ENCODE measurements at regions of chr5 and their contacts with region 1.

Region 1: DNA sequence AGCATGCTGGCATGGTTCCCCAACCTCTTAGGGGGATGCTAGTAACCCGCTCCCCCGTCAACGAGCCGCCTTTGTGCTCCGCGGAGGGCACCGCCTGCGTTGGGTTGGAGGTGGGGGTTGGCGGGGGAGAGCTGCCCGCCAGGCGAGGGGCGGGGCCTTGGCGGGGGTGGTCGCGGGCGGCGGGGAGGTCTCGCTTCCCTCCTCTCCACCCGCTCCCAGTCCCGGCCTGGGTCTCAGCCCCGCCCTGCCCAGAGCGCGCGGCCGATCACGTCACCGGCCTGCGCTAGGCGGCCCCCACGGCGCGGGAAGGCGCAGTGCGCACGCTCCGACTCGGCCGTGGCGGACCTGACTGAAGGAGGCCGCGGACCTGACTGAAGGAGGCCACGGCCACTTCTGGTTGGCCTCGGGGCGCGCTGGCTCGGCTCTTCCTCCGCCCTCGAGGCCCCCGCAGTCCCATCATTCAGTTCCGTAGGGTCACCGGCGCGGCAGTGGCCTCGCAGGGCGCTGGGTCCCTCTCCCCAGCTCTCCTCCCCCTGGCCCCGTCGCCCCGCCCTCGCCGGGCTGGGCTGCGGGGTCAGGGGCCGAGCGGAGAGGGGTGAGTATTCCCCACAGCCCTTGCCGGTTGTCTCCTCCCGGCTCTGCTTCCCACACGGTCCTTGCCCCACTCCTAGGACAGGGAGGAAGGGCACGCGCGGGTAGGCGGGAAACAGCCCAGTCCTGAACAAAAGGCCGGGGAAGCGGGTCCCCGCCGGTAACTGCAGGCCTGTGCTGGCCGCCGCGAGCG is at the start of gene ATG10:
- DNase-seq: peak; percentile 80 to 88 (median 86)
- H3K4me3 ChIP-seq: peak within 1 kb of the TSS; percentile 88 to 94
- H3K4me3 Mint-ChIP-seq: peak within 1 kb of the TSS; percentile 87 to 100 (median 98)
- H3K27ac ChIP-seq: peak within 1 kb of the TSS; percentile 93
- H3K27ac Mint-ChIP-seq: peak within 1 kb of the TSS; percentile 96 to 100 (median 99)
- H3K4me1 ChIP-seq: peaks cover 24% of the 10 kb centered on the region
- H3K4me1 Mint-ChIP-seq: peaks cover 8 to 31% (median 22%) of the 10 kb centered on the region in 4 donors
- H3K27me3 ChIP-seq: no peaks in the 10 kb centered on the region
- H3K27me3 Mint-ChIP-seq: no peaks in the 10 kb centered on the region
- total RNA-seq, gene ATG10: 7.5 to 7.9 TPM

Region 2: DNA sequence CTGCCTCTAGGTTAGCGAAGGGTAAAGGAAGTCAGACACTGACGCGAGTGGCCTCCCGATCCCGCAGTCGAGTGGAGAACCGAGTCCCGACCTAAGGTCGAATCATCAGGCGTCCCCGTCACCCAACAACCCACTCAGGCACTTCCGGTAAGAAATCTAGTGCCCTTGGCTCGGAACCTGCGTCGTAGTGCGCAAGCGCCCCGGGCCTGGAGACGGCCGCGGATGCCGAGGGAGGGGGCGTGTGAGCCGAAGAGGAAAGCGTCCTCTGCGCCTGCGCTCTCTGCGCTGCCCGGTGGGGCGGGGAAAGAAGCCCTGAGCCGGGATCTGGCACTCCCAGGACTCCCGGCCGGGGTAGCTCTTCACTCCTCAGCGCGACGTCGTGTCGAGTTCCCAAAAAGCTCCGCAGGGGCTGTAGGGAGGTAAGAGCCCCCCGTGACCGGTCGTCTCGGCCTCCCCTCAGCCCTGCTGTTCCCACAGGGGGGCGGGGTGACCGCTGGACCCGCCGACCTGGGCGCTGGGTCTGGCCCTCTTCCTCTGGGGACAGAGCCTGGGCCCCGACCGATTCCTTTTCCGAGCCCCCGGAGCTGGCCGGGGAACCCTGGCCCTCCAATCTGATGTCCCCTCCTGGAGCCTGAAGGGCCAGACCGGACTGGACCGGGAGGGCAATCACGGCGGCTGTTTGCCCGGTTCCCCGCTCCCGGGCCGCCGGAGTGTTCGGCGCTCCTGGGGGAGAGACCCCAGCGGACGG is 1564.0 kb before region 1 on chr5 and contains the start of gene ZFYVE16:
- CTCF ChIA-PET with region 1: no interaction called
- POLR2A ChIA-PET with region 1: no interaction called
- intact Hi-C with region 1: loop called (anchors 5 kb)
- DNase-seq: peak; percentile 95 to 97 (median 96)
- H3K4me3 ChIP-seq: peak within 1 kb of the TSS; percentile 73 to 79
- H3K4me3 Mint-ChIP-seq: peak within 1 kb of the TSS; percentile 92 to 98 (median 96)
- H3K27ac ChIP-seq: peak within 1 kb of the TSS; percentile 86
- H3K27ac Mint-ChIP-seq: peak within 1 kb of the TSS; percentile 91 to 100 (median 99)
- H3K4me1 ChIP-seq: peaks cover 22% of the 10 kb centered on the region
- H3K4me1 Mint-ChIP-seq: peaks cover 15 to 24% (median 20%) of the 10 kb centered on the region in 4 donors
- H3K27me3 ChIP-seq: no peaks in the 10 kb centered on the region
- H3K27me3 Mint-ChIP-seq: no peaks in the 10 kb centered on the region
- total RNA-seq, gene ZFYVE16: 23.2 to 25.3 TPM

Region 3: DNA sequence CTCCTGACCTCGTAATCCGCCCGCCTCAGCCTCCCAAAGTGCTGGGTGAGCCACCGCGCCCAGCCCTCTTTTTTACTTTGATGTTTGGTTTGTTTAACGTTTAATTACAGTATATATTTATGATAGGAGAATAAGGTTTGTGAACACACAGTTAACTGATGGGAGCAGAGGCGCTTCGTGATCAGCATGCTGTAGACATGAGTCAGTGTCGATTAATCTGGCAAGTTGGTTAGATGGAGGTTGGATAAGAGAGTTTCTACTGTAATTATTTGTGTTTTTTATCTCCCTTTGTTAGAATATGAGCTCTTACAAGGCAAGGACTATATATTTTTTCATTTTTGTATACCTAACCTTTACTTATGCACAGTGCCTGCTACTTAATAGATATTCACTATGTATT is 14.2 kb after region 1 on chr5:
- CTCF ChIA-PET with region 1: no interaction called
- POLR2A ChIA-PET with region 1: no interaction called
- intact Hi-C with region 1: no loop called
- DNase-seq: no peak
- H3K4me3 ChIP-seq: no peak overlapping the region
- H3K4me3 Mint-ChIP-seq: no peak overlapping the region
- H3K27ac ChIP-seq: no peak overlapping the region
- H3K27ac Mint-ChIP-seq: peak overlapping the region in 1 of 7 donors; percentile 9
- H3K4me1 ChIP-seq: no peaks in the 10 kb centered on the region
- H3K4me1 Mint-ChIP-seq: peaks cover 0 to 5% (median 2%) of the 10 kb centered on the region in 4 donors
- H3K27me3 ChIP-seq: no peaks in the 10 kb centered on the region
- H3K27me3 Mint-ChIP-seq: no peaks in the 10 kb centered on the region

Region 4: GRCh38 chr5:82278095-82278918 is 306.4 kb after region 1 on chr5 and contains the start of gene RPS23:
- CTCF ChIA-PET with region 1: no interaction called
- POLR2A ChIA-PET with region 1: interaction called, 3 read pairs
- intact Hi-C with region 1: loop called (anchors 1 kb)
- DNase-seq: peak; percentile 86 to 89 (median 88)
- H3K4me3 ChIP-seq: peak within 1 kb of the TSS; percentile 84 to 93
- H3K4me3 Mint-ChIP-seq: peak within 1 kb of the TSS; percentile 86 to 99 (median 96)
- H3K27ac ChIP-seq: peak within 1 kb of the TSS; percentile 79
- H3K27ac Mint-ChIP-seq: peak within 1 kb of the TSS; percentile 94 to 99 (median 98)
- H3K4me1 ChIP-seq: peaks cover 23% of the 10 kb centered on the region
- H3K4me1 Mint-ChIP-seq: peaks cover 15 to 48% (median 30%) of the 10 kb centered on the region in 4 donors
- H3K27me3 ChIP-seq: no peaks in the 10 kb centered on the region
- H3K27me3 Mint-ChIP-seq: no peaks in the 10 kb centered on the region
- total RNA-seq, gene RPS23: 2,959 to 3,147 TPM